Activated T-helper 1 cell treated with anti-CD3 and anti-CD28 coated beads, Interleukin-12 subunit alpha, Interleukin-12 subunit beta, Interleukin-2, Interleukin-4 antibody, amounts not matched to agents 30 ng/mL and 10 ng/mL and 1 ng/mL, durations not matched to agents 14 hours and 24 hours and 36 hours (primary cell): ENCODE measurements at regions of chr19 and their contacts with region 1.

Region 1: DNA sequence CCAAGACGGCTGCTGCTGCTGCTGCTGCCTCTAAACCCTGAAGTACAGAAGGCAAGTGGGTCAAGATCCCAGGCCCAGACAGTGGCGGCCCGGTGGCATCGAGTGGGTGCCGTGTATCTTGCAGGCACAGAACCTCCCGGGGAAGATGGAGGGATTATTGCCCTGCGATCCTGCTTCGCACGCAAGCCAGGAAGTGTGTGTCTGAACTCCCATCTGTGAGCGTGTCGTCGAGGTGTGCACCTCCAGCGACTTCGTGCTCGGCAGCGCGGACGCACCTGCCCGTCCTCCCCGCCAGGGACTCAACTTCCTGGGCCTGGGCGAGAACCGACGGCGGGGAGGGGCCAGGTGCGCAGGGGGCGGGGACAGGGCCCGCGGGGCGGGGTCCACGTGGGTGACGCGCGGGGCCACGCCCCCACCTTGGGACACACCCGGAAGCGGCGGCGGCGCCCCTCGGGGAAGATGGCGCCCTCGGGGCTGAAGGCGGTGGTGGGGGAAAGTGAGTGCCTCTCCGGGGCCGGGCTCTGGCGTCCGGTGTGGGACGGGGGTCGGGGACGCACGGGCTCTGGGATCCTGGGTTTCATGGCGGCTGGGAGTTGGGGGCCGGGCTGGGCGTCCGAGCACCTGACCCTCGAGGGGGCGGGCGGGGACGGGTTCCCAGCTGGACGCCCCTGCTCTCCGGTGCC is at the start of gene STXBP2:
- DNase-seq: peak; percentile 85
- H3K4me3 Mint-ChIP-seq: peak within 1 kb of the TSS; percentile 85
- H3K27ac Mint-ChIP-seq: peak within 1 kb of the TSS; percentile 77
- H3K4me1 Mint-ChIP-seq: peaks cover 35% of the 10 kb centered on the region
- H3K27me3 Mint-ChIP-seq: no peaks in the 10 kb centered on the region
- total RNA-seq, gene STXBP2: 101 and 102 TPM in 2 replicates

Region 2: DNA sequence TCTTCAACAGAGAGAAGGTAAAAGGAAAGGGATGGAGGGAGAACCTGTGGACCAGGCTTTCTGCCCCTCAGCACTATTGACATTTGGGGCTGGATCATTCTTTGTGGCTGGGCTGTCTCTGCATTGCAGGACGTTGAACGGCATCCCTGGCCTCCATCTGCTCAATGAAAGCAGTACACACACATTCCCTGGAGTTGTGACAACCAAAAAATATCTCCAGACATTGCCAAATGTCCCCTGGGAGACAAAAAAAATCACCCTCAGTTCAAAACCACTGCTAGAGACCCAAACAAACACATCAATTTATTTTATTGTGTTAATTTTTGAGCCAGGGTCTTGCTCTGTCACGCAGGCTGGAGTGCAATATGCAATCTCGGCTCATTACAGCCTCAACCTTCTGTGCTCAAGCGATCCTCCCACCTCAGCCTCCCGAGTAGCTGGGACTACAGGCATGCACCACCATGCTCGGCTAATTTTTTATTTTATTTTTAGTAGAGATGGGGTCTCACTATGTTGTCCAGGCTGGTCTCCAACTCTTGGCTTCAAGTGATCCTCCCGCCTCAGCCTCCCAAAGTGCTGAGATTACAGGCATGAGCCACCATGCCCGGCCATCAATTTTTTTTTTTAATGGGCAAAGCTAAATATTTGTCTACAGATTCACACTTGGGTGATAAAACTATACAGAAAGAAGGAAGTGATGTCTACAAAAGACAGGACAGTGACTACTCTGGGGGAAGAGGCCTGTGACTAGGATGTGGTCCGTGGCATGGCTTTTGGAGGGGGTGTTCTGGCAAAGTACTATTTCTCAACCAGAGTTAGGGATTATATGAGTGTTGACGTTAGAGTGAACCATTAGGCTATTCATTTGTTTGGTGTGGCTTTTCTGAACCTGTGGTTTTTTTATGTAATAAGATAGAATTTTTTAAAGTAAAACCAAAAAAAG is 385.6 kb before region 1 on chr19:
- intact Hi-C with region 1: no loop called
- DNase-seq: no peak
- H3K4me3 Mint-ChIP-seq: no peak overlapping the region
- H3K27ac Mint-ChIP-seq: no peak overlapping the region
- H3K4me1 Mint-ChIP-seq: no peaks in the 10 kb centered on the region
- H3K27me3 Mint-ChIP-seq: peaks cover 10% of the 10 kb centered on the region

Region 3: DNA sequence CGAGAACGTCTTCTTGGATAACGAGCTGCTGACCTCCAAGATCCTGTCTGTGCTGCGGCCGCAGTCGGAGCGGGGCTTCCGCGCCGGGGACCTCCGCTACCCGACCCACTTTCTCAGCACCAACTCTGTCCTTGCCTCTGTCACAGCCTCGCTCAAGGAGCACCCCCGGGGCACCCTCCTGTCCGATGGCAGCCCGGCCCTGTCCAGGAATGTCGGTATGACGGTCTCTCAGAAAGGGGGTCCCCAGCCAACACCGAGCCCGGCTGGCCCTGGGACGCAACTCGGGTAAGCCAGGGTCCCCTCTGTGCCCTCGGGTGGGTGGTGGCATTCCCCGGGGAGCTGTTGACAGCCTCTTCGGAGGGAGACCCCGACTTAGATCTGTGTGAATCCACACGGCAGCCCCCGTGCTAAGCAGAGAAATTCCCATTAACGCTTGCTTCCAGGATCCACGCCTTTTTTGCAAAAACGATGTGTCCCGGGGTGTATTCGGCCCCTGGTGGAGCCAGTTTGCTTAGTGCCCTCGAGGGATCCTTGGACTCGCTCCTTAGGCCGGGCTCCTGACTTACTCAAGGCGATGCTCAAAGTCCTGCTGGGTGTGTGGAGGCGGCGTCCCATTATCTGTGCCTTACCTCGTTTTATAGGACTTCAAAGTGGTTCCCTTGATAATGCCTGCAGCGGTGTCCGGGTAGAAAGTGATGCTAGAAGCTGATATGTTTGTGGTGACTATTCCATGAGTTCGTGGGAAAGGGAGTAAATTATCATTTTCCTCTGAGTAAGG is 196.4 kb before region 1 on chr19:
- intact Hi-C with region 1: no loop called
- DNase-seq: no peak
- H3K4me3 Mint-ChIP-seq: no peak overlapping the region
- H3K27ac Mint-ChIP-seq: no peak overlapping the region
- H3K4me1 Mint-ChIP-seq: no peaks in the 10 kb centered on the region
- H3K27me3 Mint-ChIP-seq: no peaks in the 10 kb centered on the region

Region 4: DNA sequence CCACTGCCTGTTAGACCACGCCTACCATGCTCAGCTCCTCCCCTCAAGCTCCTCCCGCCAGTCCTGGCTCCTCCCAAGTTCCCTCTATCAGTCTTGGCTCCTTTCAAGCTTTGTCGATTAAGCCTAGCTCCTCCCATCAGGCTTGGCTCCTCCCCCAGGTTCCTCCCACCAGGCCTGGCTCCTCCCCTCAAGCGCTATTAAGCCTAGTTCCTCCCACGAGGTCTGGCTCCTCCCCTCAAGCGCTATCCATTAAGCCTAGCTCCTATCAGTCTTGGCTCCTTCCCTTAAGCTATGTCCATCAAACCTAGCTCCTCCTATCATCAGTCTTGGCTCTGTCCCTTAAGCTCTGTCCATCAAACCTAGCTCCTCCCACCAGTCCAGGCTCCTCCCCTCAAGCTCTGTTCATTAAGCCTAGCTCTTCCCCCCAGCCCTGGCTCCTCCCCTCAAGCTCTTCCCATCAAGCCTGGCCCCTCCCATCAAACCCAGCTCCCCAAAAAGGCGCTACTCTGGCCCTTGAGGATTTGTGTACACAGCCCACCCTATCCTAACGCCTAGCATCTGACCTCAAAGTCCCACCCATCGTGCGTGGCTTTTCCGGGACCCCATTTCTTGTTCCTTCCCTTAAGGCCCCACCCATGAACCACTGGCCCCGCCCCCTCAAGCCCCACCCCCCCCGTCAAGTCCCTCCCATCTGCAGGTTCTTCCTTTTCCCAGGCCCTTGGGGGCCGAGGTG is 31.2 kb before region 1 on chr19:
- intact Hi-C with region 1: loop called (anchors 2 kb)
- DNase-seq: no peak
- H3K4me3 Mint-ChIP-seq: no peak overlapping the region
- H3K27ac Mint-ChIP-seq: no peak overlapping the region
- H3K4me1 Mint-ChIP-seq: no peaks in the 10 kb centered on the region
- H3K27me3 Mint-ChIP-seq: peaks cover 10% of the 10 kb centered on the region